Activated B cell treated with CpG ODN at 0.5 μM for 24 hours (primary cell): ENCODE measurements at regions of chr2 and their contacts with region 1.

Region 1: GRCh38 chr2:102240640-102241370 is 54.0 kb downstream of the IL1RL2 start:
- DNase-seq: peak; percentile 72
- ATAC-seq: peak; percentile 91
- H3K4me3 Mint-ChIP-seq: no peak overlapping the region
- H3K27ac Mint-ChIP-seq: no peak overlapping the region
- H3K4me1 Mint-ChIP-seq: peaks cover 22% of the 10 kb centered on the region
- H3K27me3 Mint-ChIP-seq: peaks cover 14% of the 10 kb centered on the region
- CTCF ChIP-seq: peak; percentile 89

Region 2: DNA sequence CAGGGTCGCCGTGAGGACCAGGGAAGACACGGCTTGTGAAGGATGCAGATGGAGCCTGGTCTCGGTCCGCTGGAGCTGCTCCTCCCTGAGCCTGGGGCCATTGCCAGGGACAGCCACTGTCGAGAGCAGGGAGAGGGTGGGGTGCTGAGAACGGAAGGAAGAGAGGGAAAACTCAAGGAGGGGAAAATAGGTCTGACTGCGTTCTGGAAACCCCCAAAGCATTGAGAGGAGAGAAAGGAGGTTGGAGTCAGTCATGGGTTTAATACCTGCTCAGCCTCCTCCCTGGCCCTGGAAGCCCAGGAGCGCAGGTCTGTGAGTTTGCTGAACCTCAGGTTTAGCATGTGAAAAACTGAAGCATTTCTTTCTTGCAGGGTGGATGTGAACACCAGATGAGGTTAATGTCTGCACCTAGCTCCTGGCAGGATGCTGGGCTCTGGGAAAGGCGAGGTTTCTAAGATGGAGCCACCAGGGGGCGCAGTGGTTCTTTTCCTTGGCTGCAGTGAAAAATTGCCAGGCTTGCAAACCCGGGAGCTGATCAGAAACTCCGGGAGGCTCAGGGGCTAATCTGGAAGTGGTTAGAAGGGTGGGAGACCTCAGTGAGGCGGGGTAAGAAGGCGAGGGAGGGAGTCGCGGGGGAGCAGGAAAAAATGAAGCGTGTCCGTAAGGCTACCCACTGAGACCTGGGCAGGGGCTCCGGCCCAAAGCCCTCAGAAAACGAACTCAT is 898.7 kb before region 1 on chr2:
- CTCF ChIA-PET with region 1: interaction called, 26 read pairs
- POLR2A ChIA-PET with region 1: no interaction called
- intact Hi-C with region 1: loop called (anchors 1 kb)
- DNase-seq: peak; percentile 55
- ATAC-seq: no peak
- H3K4me3 Mint-ChIP-seq: no peak overlapping the region
- H3K27ac Mint-ChIP-seq: no peak overlapping the region
- H3K4me1 Mint-ChIP-seq: peaks cover 7% of the 10 kb centered on the region
- H3K27me3 Mint-ChIP-seq: peaks cover 6% of the 10 kb centered on the region
- CTCF ChIP-seq: peak; percentile 50

Region 3: DNA sequence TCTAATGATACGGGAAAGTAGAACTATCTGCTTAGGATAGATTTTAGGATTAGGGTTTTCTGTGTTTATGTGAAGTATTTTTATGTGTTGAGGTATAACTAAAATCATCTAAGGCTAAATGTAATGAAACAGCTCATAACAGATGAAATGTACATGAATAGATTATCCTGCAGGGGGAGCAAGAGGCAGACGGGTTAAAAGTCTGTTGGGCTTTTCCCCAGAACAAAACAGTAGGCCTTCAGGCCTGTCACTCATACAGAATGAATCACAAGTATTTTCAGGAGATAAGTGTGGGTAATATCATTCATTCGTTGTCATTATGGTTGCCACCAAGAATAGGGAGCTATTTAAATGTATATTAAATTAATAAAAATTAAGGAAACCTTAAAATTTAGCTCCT is 356.9 kb before region 1 on chr2:
- CTCF ChIA-PET with region 1: interaction called, 64 read pairs
- POLR2A ChIA-PET with region 1: interaction called, 5 read pairs
- intact Hi-C with region 1: loop called (anchors 1 kb)
- DNase-seq: no peak
- ATAC-seq: peak; percentile 67
- H3K4me3 Mint-ChIP-seq: no peak overlapping the region
- H3K27ac Mint-ChIP-seq: no peak overlapping the region
- H3K4me1 Mint-ChIP-seq: peaks cover 2% of the 10 kb centered on the region
- H3K27me3 Mint-ChIP-seq: no peaks in the 10 kb centered on the region
- CTCF ChIP-seq: no peak

Region 4: DNA sequence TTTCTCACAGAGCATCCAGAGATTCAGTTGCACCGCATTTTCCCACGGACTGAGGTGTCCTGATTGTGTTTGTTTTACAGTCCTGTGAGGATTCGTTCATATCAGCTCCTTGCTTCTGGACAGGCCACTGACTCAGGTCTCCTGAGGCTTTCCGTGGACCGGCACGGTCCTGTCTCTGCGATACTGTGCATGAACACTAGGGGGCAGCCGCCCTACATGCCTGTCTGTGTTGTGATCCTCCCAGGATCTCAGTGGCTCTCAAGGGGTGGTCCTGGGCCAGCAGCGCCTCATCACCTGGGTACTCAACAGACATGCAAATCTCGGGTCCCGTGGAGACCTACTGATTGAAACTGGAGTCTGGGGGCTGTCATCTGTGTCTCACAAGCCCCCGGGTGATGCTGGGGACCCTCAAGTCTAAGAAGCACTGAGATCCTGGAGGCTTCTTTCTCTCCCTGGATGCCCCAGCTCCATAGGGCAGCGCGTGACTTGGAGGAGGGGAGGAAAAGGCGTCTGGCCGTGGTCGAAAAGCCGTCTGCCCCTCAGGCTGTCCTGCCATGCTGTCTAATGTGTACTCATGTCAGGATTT is 220.1 kb before region 1 on chr2:
- CTCF ChIA-PET with region 1: interaction called, 73 read pairs
- POLR2A ChIA-PET with region 1: no interaction called
- intact Hi-C with region 1: loop called (anchors 1 kb)
- DNase-seq: peak; percentile 67
- ATAC-seq: peak; percentile 99
- H3K4me3 Mint-ChIP-seq: no peak overlapping the region
- H3K27ac Mint-ChIP-seq: no peak overlapping the region
- H3K4me1 Mint-ChIP-seq: peaks cover 3% of the 10 kb centered on the region
- H3K27me3 Mint-ChIP-seq: peaks cover 8% of the 10 kb centered on the region
- CTCF ChIP-seq: peak; percentile 28

Region 5: DNA sequence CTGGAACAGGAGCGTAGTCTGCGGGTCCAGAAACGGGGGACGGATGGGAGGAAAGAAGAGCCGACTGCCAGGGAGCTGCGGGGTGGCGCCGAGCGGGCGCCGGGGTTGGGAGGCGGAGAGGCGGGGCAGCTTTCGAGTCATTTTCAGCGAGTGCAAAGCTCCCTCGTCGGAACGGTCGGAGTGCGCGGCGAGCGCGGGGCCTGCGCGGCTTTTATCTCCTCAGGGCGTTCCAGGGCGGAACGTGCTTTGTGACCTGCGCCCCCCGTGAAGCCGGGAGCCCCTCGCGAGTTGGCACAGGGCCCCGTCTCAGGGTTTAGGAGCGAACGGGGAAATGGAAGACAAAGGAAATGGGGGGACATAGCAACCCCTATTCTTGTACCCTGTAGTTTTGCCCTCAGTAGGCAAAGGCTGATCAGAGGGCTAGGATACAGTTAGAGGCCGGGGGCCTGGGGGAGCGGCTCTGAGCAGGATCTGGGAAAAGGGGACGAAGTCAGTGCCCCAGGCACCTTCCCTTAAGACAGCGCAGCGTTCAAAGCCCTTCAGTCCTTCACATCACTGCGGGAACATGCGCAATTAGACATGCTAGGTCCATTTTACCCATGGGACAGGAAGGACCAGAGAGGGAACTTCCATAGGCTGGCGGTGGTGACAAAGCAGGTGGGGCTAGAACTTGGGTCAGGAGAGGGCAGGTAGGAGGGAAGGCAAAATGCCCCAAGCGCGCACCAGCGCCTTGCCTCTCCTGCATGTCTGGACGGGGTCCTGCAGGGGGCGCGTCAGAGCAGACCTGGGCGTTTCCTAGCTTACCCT is 10.4 kb after region 1 on chr2:
- CTCF ChIA-PET with region 1: interaction called, 10 read pairs
- POLR2A ChIA-PET with region 1: interaction called, 3 read pairs
- intact Hi-C with region 1: no loop called
- DNase-seq: peak; percentile 30
- ATAC-seq: peak; percentile 64
- H3K4me3 Mint-ChIP-seq: peak overlapping the region; percentile 75
- H3K27ac Mint-ChIP-seq: no peak overlapping the region
- H3K4me1 Mint-ChIP-seq: peaks cover 12% of the 10 kb centered on the region
- H3K27me3 Mint-ChIP-seq: peaks cover 30% of the 10 kb centered on the region
- CTCF ChIP-seq: no peak

Region 6: GRCh38 chr2:102667072-102667471 is 426.3 kb after region 1 on chr2:
- CTCF ChIA-PET with region 1: no interaction called
- POLR2A ChIA-PET with region 1: no interaction called
- intact Hi-C with region 1: no loop called
- DNase-seq: no peak
- ATAC-seq: no peak
- H3K4me3 Mint-ChIP-seq: no peak overlapping the region
- H3K27ac Mint-ChIP-seq: no peak overlapping the region
- H3K4me1 Mint-ChIP-seq: no peaks in the 10 kb centered on the region
- H3K27me3 Mint-ChIP-seq: peaks cover 12% of the 10 kb centered on the region
- CTCF ChIP-seq: no peak